AG04450 (cell line): ENCODE measurements at regions of chr14 and their contacts with region 1.

Region 1: DNA sequence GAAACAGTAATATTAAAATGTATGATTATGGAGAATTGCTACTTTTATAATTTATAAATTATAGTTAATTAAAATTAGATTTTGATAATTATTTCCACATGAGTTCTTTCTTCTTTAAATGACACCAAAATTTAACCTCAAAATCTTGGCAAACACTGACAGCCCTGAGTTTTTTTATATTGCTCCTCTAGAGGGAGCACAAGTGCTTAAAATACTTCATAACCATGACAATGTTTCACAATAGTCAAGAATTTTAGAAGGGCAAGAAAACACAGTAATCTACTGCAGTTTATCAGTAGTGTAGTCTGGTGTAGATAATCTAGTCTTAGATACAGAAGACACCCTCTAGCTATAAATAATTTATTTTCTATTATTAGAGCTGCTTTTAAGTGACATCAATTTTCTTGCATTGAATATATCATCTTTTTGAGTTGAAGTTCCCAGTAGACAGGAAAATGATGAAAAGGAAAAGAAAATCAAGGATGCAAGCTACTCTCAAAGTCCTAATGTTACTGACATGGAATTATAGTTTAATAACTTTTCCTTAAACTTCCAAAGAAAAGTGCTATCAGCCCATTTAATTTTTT is 14.3 kb upstream of the PTGER2 start:
- DNase-seq: no peak
- H3K4me3 ChIP-seq: no peak overlapping the region
- H3K27ac ChIP-seq: no peak overlapping the region
- H3K27me3 ChIP-seq: no peaks in the 10 kb centered on the region
- CTCF ChIP-seq: peak; percentile 68

Region 2: GRCh38 chr14:52467515-52468266 is 167.9 kb after region 1 on chr14:
- CTCF ChIA-PET with region 1: interaction called, 11 read pairs
- POLR2A ChIA-PET with region 1: no interaction called
- DNase-seq: no peak
- H3K4me3 ChIP-seq: no peak overlapping the region
- H3K27ac ChIP-seq: no peak overlapping the region
- H3K27me3 ChIP-seq: no peaks in the 10 kb centered on the region
- CTCF ChIP-seq: no peak

Region 3: GRCh38 chr14:52808101-52808500 is 508.3 kb after region 1 on chr14:
- CTCF ChIA-PET with region 1: no interaction called
- POLR2A ChIA-PET with region 1: no interaction called
- DNase-seq: no peak
- H3K4me3 ChIP-seq: no peak overlapping the region
- H3K27ac ChIP-seq: no peak overlapping the region
- H3K27me3 ChIP-seq: no peaks in the 10 kb centered on the region
- CTCF ChIP-seq: no peak